ENCODE measurements at regions of chr18 and their contacts with region 1.

Region 1: GRCh38 chr18:49304751-49305150 is 155.7 kb downstream of the DYM start:
- DNase-seq: no peak
- H3K4me3 ChIP-seq: no peak overlapping the region
- H3K27ac ChIP-seq: no peak overlapping the region
- H3K4me1 ChIP-seq: no peaks in the 10 kb centered on the region
- H3K27me3 ChIP-seq: no peaks in the 10 kb centered on the region
- CTCF ChIP-seq: no peak

Region 2: GRCh38 chr18:49399003-49399402 is 94.3 kb after region 1 on chr18:
- intact Hi-C with region 1: loop called (anchors 10 kb)
- DNase-seq: no peak
- H3K4me3 ChIP-seq: no peak overlapping the region
- H3K27ac ChIP-seq: no peak overlapping the region
- H3K4me1 ChIP-seq: peaks cover 0 to 7% of the 10 kb centered on the region in 2 donors
- H3K27me3 ChIP-seq: no peaks in the 10 kb centered on the region
- CTCF ChIP-seq: no peak